Aorta (tissue), 5 donors: ENCODE measurements at regions of chr14 and their contacts with region 1.

Region 1: DNA sequence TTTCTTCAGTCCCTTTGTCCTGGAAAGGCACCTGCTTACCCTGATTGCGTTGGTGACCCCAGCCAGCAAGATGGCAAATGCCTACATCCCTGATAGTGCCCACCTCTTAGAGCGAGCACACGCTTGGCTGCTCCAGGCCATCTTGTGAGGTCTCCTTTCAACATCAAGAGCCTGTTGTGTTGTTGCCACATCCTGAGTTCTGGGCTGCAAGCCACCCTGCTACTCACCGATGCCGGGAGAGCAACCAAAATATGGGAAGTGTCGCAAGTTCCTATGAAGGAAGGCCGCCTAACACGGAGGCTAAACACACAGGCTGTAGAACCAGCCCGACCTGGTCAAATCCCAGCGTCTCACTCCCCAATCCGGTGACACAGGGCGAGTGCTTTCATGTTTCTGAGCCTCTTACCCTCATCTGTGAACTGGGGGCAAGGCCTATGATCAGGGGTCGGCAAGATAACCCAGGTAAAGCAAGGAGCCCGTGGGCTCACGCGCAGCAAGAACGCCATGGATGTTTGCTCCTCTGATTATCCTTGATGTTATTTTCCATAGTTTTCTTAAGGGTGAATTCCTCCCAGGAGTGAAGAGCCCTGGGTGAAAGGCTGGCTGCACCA is 98.4 kb downstream of the LGMN start:
- DNase-seq: peak in 1 of 2 donors; percentile 90
- ATAC-seq: peak; percentile 11
- H3K4me3 ChIP-seq: no peak overlapping the region
- H3K27ac ChIP-seq: peak overlapping the region; percentile 98 to 99
- H3K4me1 ChIP-seq: peaks cover 0 to 9% of the 10 kb centered on the region in 2 donors
- H3K27me3 ChIP-seq: no peaks in the 10 kb centered on the region

Region 2: GRCh38 chr14:92603309-92604242 is 46.5 kb before region 1 on chr14:
- intact Hi-C with region 1: loop called in 1 of 2 experiments (anchors 5 kb)
- DNase-seq: peak; percentile 77 to 88
- ATAC-seq: peak; percentile 84
- H3K4me3 ChIP-seq: no peak overlapping the region
- H3K27ac ChIP-seq: peak overlapping the region; percentile 90 to 98
- H3K4me1 ChIP-seq: peaks cover 0 to 3% of the 10 kb centered on the region in 2 donors
- H3K27me3 ChIP-seq: no peaks in the 10 kb centered on the region

Region 3: DNA sequence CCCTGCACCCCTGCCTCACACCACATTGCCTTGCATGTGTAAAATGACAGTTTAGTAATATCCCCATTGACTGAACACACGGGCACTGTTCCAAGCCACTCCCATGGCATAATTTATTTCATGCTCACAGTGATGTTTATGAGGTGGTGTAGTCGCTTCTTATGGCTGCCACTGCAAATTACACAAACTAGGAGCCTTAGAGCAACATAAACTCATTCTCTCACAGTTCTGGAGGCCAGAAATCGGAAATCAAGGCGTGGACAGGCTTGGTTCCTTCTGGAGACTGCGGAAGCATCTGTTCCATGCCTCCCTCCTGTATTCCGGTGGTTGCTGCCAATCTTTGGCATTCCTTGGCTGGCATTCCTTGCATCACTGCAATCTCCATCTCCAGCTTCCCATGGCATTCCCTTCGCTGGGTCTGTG is 39.2 kb before region 1 on chr14:
- intact Hi-C with region 1: loop called in 1 of 2 experiments (anchors 2 kb)
- DNase-seq: peak in 1 of 2 donors; percentile 65
- ATAC-seq: no peak
- H3K4me3 ChIP-seq: no peak overlapping the region
- H3K27ac ChIP-seq: peak overlapping the region in 1 of 2 donors; percentile 56
- H3K4me1 ChIP-seq: no peaks in the 10 kb centered on the region
- H3K27me3 ChIP-seq: no peaks in the 10 kb centered on the region

Region 4: GRCh38 chr14:93975791-93976476 is 1325.9 kb after region 1 on chr14:
- intact Hi-C with region 1: loop called in 1 of 2 experiments (anchors 5 kb)
- DNase-seq: no peak
- ATAC-seq: no peak
- H3K4me3 ChIP-seq: peak overlapping the region; percentile 58 to 76
- H3K27ac ChIP-seq: peak overlapping the region in 1 of 2 donors; percentile 93
- H3K4me1 ChIP-seq: peaks cover 3% of the 10 kb centered on the region in 2 donors
- H3K27me3 ChIP-seq: no peaks in the 10 kb centered on the region